Activated CD4-positive, alpha-beta T cell treated with anti-CD3 and anti-CD28 coated beads for 36 hours (primary cell): ENCODE measurements at regions of chr1 and their contacts with region 1.

Region 1: DNA sequence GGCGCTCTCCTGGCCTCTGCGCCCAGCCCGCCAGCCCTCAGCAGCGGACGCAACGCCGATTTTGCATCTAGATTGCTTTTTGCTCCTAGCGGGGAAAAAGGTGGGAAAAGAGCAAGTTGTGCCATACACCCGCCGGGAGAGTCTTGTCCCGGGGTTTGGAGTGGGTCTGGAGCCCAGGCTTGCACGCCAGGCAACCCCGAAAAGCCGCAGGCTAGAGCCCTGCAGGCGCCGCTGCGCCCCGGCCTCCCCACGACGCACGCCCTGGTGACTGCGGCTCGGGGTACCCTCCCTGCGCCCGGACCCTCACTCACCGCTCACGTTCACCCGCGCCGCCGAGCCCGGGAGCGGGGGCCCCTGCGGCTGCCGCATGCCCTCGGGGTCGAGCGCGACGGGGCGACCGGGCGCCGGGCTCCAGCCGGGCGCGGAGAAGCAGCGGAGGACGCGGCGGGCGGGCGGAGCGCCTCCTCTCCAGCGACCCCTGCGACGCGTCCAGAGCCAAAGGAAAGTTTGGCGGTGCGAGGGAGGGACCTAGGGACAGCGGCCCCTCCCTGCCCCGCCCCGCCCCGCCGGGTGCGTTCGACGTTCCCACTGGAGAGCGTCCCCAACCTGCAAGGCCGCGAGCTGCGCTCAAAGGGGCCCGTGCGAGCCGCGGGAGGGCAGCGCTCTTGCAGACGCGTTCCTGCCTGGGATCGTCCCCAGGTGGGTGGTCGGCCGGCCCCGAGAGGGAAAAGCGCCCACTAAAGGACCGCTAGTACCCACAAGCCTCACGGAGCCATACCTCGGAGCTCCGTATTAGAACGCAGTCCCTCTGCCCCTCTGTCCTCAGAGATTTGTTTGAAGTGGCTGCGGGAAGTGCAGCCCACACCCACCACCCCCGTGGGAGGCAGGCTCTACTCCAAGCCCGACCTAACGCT is at the start of gene LPAR3:
- DNase-seq: peak; percentile 56
- ATAC-seq: peak; percentile 70
- H3K4me3 Mint-ChIP-seq: peak within 1 kb of the TSS; percentile 62
- H3K27ac Mint-ChIP-seq: no peak within 1 kb of the TSS
- H3K4me1 Mint-ChIP-seq: peaks cover 18% of the 10 kb centered on the region
- H3K27me3 Mint-ChIP-seq: peaks cover 30% of the 10 kb centered on the region
- total RNA-seq, gene LPAR3: 0.21 to 0.23 TPM

Region 2: GRCh38 chr1:84834419-84835064 is 58.4 kb before region 1 on chr1:
- CTCF ChIA-PET with region 1: no interaction called
- POLR2A ChIA-PET with region 1: no interaction called
- intact Hi-C with region 1: loop called in 1 of 2 experiments (anchors 5 kb)
- DNase-seq: no peak
- ATAC-seq: no peak
- H3K4me3 Mint-ChIP-seq: no peak overlapping the region
- H3K27ac Mint-ChIP-seq: no peak overlapping the region
- H3K4me1 Mint-ChIP-seq: peaks cover 10% of the 10 kb centered on the region
- H3K27me3 Mint-ChIP-seq: peaks cover 2% of the 10 kb centered on the region